Activated naive CD4-positive, alpha-beta T cell treated with anti-CD3 and anti-CD28 coated beads for 36 hours (primary cell): ENCODE measurements at regions of chr12 and their contacts with region 1.

Region 1: DNA sequence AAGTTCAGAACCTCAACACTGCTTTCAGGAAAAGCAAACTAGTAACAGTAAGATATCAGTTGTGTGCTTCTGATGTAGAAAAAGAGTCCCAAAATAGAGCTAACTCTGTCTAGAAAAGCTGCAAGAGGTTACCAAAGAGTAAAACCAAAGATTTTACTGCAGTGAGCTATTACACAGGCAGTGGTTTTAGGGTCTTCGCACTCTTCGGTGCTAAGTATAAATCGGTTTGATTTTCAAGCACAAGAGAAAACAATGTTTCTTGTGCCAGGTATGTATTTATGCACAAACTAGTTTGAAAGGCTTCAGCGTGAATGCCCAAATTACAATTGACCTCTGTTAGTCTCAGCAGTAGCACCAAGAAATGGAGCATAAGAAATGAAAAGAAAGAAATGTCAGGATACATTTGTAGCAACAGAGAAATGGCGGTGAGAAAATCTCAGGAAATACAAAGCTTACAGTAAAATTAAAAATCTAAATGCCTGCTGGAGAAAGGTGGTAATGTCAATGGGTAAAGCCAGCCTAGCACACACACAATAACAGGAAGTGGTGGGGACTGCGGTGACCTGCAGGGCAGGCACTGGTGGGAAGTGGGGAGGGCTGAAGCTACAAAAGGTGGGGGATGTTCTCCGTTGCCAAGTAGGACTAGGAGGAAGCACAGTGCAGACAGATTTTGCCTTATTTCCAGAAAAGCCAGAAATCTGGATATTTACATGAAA is 18.0 kb upstream of the DYRK2 start:
- DNase-seq: peak; percentile 93
- H3K4me3 Mint-ChIP-seq: peak overlapping the region; percentile 33
- H3K27ac Mint-ChIP-seq: peak overlapping the region; percentile 79
- H3K4me1 Mint-ChIP-seq: peaks cover 81% of the 10 kb centered on the region
- H3K27me3 Mint-ChIP-seq: no peaks in the 10 kb centered on the region

Region 2: DNA sequence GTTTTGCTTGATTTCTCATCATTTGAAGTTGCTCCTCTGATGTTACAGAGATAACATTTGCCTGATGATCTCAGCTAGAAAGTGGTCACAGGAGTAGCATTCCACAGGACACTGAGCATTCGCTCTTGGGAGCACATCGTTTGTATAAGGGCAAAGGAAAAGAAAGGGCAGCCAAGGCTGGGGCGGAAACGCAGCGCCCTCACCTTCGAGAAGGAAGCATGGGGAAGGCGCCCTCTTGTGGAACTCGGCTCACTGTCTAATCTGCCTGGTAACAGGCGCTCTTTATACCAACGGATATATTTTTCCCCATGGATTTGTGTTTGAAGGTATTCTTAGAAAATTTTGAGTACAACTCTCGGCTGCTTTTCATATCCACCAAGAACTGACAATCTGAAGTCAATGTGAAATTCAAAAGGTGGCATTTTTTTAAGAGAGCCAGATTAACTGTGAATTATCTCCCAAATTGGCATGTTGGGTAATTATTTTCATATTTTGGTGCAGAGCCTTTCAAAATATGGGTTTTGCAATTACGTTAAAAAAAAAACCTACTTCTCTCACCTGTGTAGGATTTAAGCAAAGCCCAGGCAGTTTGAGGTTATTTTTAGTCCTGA is 188.7 kb before region 1 on chr12:
- CTCF ChIA-PET with region 1: no interaction called
- intact Hi-C with region 1: loop called (anchors 5 kb)
- DNase-seq: peak; percentile 93
- H3K4me3 Mint-ChIP-seq: peak overlapping the region; percentile 7
- H3K27ac Mint-ChIP-seq: no peak overlapping the region
- H3K4me1 Mint-ChIP-seq: peaks cover 19% of the 10 kb centered on the region
- H3K27me3 Mint-ChIP-seq: no peaks in the 10 kb centered on the region

Region 3: GRCh38 chr12:67578976-67579661 is 51.4 kb before region 1 on chr12:
- CTCF ChIA-PET with region 1: no interaction called
- intact Hi-C with region 1: loop called (anchors 2 kb)
- DNase-seq: peak; percentile 31
- H3K4me3 Mint-ChIP-seq: no peak overlapping the region
- H3K27ac Mint-ChIP-seq: no peak overlapping the region
- H3K4me1 Mint-ChIP-seq: peaks cover 38% of the 10 kb centered on the region
- H3K27me3 Mint-ChIP-seq: peaks cover 3% of the 10 kb centered on the region

Region 4: GRCh38 chr12:67592216-67593011 is 38.1 kb before region 1 on chr12:
- CTCF ChIA-PET with region 1: interaction called, 3 read pairs
- intact Hi-C with region 1: loop called (anchors 1 kb)
- DNase-seq: peak; percentile 32
- H3K4me3 Mint-ChIP-seq: no peak overlapping the region
- H3K27ac Mint-ChIP-seq: peak overlapping the region; percentile 22
- H3K4me1 Mint-ChIP-seq: peaks cover 49% of the 10 kb centered on the region
- H3K27me3 Mint-ChIP-seq: no peaks in the 10 kb centered on the region

Region 5: GRCh38 chr12:67747869-67748742 is 117.6 kb after region 1 on chr12:
- CTCF ChIA-PET with region 1: no interaction called
- intact Hi-C with region 1: no loop called
- DNase-seq: no peak
- H3K4me3 Mint-ChIP-seq: no peak overlapping the region
- H3K27ac Mint-ChIP-seq: no peak overlapping the region
- H3K4me1 Mint-ChIP-seq: no peaks in the 10 kb centered on the region
- H3K27me3 Mint-ChIP-seq: no peaks in the 10 kb centered on the region